ENCODE measurements at regions of chr2 and their contacts with region 1.

Region 1: DNA sequence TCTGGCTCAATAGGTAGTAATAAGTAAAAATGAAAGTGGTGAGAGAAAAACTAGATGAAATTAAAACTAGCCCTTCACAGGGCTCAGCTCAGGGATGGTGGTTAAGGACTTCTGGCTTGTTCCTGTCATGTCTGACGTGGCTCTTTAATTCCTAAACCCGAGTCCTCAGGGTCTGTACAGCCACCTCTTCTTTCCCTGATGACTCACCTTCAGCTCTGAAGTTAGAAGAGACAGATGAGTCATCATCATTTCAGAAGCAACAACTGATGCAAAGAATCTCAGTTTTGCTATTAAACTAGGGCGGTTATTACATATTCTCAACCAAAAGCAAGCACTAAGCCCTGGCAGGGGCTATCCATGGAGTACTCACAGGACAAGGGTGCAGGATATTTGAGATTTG is 24.0 kb upstream of the ITGB6 start:
- DNase-seq: peak; percentile 54
- H3K4me3 Mint-ChIP-seq: peak overlapping the region; percentile 45
- H3K27ac Mint-ChIP-seq: peak overlapping the region; percentile 73
- H3K4me1 Mint-ChIP-seq: peaks cover 64% of the 10 kb centered on the region
- H3K27me3 Mint-ChIP-seq: peaks cover 16% of the 10 kb centered on the region

Region 2: DNA sequence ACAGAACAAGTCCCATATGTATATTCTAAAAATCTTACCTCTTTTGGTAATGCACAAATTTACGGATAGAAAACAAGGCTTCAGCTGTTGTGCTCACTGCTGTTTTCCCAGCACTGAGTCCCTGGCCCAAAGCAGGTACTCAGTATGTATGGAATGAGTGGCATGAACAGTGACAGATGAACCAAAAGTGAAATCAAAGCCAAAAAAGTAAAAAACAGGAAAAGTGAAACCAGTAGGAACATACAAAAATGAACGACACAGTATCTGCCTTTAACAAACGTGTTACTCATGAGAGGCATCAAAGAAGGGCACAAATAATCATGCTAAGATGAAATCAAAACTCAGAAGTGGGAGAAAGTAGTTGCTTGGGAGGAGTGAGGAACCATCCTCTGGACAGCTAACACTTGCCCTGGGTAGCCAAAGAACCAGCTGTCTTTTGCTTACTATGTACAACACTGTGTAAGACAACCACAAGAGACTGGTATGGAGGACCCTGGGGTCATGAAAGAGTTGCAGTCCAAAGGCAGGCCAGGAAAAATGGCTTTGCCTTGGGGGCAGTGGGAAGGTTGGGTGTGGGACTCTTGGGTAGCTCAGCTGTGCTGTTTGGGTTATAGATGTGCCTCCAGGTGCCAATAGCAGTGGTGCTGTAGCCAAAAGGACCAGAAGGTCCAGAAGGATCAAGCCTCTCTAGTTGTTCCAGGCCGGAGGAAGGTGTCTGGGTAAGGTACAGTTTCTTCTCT is 121.9 kb before region 1 on chr2:
- CTCF ChIA-PET with region 1: no interaction called
- POLR2A ChIA-PET with region 1: no interaction called
- intact Hi-C with region 1: no loop called
- DNase-seq: no peak
- H3K4me3 Mint-ChIP-seq: no peak overlapping the region
- H3K27ac Mint-ChIP-seq: no peak overlapping the region
- H3K4me1 Mint-ChIP-seq: peaks cover 2% of the 10 kb centered on the region
- H3K27me3 Mint-ChIP-seq: peaks cover 6% of the 10 kb centered on the region

Region 3: DNA sequence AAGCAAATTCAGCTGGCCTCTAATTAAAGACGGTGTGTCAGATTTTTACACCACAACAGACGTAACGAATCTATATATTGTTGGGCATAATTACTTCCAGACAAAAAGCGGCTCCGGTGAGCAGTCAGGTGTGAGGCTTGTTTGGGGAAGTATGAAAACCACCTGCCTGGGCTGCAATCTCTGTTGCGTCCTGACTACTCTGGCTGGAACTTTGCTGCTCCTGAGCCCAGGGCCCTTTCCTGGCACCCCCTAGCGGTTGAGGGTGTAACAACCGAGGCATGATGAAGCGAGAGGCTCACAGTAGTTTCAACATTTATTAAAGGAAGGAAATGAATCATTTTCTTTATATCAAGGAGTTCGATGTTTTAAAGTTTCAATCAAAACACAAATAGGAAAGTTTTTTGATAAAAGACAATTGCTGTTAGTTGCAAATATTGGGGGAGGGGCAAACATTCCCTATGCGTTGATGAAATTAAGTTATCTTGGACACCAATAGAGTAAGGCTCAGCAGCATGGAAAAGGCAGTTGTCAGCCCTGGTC is 13.4 kb before region 1 on chr2:
- CTCF ChIA-PET with region 1: interaction called, 18 read pairs
- POLR2A ChIA-PET with region 1: no interaction called
- intact Hi-C with region 1: no loop called
- DNase-seq: peak; percentile 82
- H3K4me3 Mint-ChIP-seq: no peak overlapping the region
- H3K27ac Mint-ChIP-seq: no peak overlapping the region
- H3K4me1 Mint-ChIP-seq: peaks cover 32% of the 10 kb centered on the region
- H3K27me3 Mint-ChIP-seq: peaks cover 5% of the 10 kb centered on the region

Region 4: DNA sequence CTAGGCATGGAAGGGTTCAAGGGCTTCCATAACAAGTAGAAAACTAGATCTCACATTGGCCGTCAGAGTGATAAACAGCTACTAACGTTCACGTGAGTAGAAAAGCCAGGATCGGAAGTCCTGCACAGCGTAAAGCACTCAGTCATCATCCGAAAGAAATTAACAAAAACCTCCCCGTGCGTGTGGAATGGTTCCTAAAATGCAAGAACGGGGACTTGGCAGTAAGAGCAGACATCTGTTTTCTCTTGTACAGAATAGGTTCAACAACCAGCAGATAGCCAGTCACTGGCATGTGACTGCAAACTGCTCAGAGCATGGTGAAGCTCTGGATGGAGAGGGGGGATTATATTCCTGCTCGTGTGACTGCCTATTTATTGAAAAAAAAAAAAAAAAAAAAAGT is 82.9 kb after region 1 on chr2:
- CTCF ChIA-PET with region 1: no interaction called
- POLR2A ChIA-PET with region 1: no interaction called
- intact Hi-C with region 1: no loop called
- DNase-seq: no peak
- H3K4me3 Mint-ChIP-seq: no peak overlapping the region
- H3K27ac Mint-ChIP-seq: no peak overlapping the region
- H3K4me1 Mint-ChIP-seq: peaks cover 12% of the 10 kb centered on the region
- H3K27me3 Mint-ChIP-seq: no peaks in the 10 kb centered on the region

Region 5: DNA sequence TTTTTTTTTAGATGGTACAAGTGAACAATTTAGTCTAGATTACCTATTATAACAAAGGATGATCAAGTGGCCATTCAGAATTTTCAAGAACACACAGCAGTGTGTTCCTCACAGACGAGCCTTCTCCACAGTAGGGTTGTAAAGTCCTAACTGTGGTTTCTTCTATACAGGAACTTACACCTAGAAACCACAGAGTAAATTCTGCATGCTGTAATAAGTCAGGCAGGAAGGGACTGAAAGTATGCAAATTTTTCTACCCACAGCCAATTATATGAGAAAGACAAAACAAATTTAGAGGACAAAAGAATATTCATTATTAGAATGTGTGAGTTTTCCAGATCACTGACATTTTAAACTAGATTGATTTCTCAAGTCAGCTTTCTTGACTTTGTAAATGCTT is 170.1 kb after region 1 on chr2:
- CTCF ChIA-PET with region 1: no interaction called
- POLR2A ChIA-PET with region 1: no interaction called
- intact Hi-C with region 1: loop called (anchors 5 kb)
- DNase-seq: no peak
- H3K4me3 Mint-ChIP-seq: peak overlapping the region; percentile 25
- H3K27ac Mint-ChIP-seq: peak overlapping the region; percentile 64
- H3K4me1 Mint-ChIP-seq: peaks cover 58% of the 10 kb centered on the region
- H3K27me3 Mint-ChIP-seq: no peaks in the 10 kb centered on the region

Region 6: GRCh38 chr2:160516547-160517365 is 292.7 kb after region 1 on chr2:
- CTCF ChIA-PET with region 1: no interaction called
- POLR2A ChIA-PET with region 1: no interaction called
- intact Hi-C with region 1: loop called (anchors 5 kb)
- DNase-seq: peak; percentile 26
- H3K4me3 Mint-ChIP-seq: no peak overlapping the region
- H3K27ac Mint-ChIP-seq: peak overlapping the region; percentile 10
- H3K4me1 Mint-ChIP-seq: peaks cover 33% of the 10 kb centered on the region
- H3K27me3 Mint-ChIP-seq: no peaks in the 10 kb centered on the region

Region 7: DNA sequence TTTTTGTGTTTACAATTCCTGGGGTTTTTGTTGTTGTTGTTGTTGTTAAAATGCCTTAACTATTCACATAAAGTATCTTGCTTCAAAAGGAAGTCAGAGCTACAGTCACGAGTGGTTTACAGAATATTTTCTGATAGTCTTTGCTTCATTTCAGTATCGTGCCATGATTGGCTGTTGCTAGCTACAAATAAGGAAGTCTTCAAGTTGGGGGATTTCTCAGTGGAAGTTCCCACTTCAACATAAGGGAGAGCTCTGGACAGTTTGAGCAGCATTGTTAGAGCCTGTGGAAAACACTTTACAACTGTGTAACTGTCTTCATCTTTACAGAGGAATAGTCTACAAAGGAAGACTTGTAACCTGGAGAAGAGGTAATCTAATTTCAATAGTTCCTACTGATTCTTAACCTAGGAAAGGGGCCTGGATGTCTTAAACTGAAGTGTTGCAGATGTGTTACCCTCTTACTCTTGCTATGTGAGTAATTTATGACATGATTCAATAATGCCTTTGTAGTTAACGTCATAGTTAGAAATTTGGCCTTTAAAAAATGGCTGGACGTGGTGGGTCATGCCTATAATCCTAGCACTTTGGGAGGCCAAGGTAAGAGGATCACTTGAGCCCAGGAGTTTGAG is 912.8 kb after region 1 on chr2:
- CTCF ChIA-PET with region 1: no interaction called
- POLR2A ChIA-PET with region 1: no interaction called
- intact Hi-C with region 1: loop called (anchors 5 kb)
- DNase-seq: peak; percentile 35
- H3K4me3 Mint-ChIP-seq: peak overlapping the region; percentile 96
- H3K27ac Mint-ChIP-seq: peak overlapping the region; percentile 100
- H3K4me1 Mint-ChIP-seq: peaks cover 45% of the 10 kb centered on the region
- H3K27me3 Mint-ChIP-seq: no peaks in the 10 kb centered on the region

Measured in activated CD4-positive, alpha-beta memory T cell treated with anti-CD3 and anti-CD28 coated beads for 36 hours (primary cell).